ENCODE measurements at regions of chr9 and their contacts with region 1.

Region 1: GRCh38 chr9:134983074-134983473 is 65.4 kb upstream of the FCN1 start:
- DNase-seq: peak; percentile 80
- ATAC-seq: peak; percentile 61

Region 2: GRCh38 chr9:134449221-134449894 is 533.7 kb before region 1 on chr9:
- intact Hi-C with region 1: loop called (anchors 5 kb)
- DNase-seq: peak; percentile 94
- ATAC-seq: peak; percentile 97

Measured in Right ventricle myocardium inferior (tissue), 1 donor.